Endothelial cell of umbilical vein (primary cell): ENCODE measurements at regions of chr15 and their contacts with region 1.

Region 1: DNA sequence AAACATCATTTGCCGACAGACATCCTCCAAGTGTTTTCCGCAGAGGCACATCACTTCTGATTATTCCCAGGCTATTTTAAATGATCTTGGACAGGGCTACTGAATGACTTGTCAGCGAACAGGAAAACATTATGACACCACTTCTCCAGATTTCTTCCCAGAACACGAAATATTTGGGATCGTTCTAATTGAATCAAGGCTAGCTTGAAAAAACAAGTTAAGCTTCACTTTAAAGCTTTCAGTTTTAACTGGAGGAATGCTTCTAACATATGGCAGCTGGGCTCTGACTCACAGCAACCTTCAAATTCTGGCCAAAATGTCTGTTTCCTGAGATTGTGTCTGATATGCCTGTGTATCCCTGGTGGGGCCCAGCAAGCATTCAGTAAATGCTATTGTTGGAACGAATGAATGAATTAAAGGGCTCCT is 127.0 kb upstream of the ICE2 start:
- DNase-seq: peak; percentile 99
- H3K4me3 ChIP-seq: peak overlapping the region in 2 of 3 experiments; percentile 60 to 77
- H3K27ac ChIP-seq: peak overlapping the region; percentile 97
- H3K4me1 ChIP-seq: peaks cover 27% of the 10 kb centered on the region
- H3K27me3 ChIP-seq: no peaks in the 10 kb centered on the region
- CTCF ChIP-seq: no peak
- POLR2A ChIP-seq: peak; percentile 29

Region 2: DNA sequence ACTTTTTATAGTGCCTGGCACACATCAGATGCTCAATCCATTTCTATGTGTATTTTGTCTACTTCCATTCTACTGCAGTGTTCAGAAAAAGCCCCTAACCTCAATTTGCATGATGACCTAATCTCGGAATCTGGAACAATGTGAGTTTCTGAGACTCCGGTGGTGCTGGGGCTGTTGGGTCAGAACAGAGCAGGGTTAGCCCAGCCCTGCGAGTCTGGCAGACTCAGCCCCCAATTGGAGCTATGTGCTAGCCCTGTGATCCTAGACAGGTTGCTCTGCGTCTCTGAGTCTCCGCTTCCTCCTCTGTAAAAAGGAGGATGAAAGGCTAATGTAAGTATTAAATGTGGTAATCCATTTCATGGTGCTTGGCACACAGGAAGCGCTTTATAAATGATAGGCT is 32.0 kb before region 1 on chr15:
- CTCF ChIA-PET with region 1: no interaction called
- POLR2A ChIA-PET with region 1: no interaction called
- dilution Hi-C with region 1: no loop called
- intact Hi-C with region 1: no loop called
- DNase-seq: no peak
- H3K4me3 ChIP-seq: no peak overlapping the region
- H3K27ac ChIP-seq: no peak overlapping the region
- H3K4me1 ChIP-seq: no peaks in the 10 kb centered on the region
- H3K27me3 ChIP-seq: no peaks in the 10 kb centered on the region
- CTCF ChIP-seq: no peak
- POLR2A ChIP-seq: no peak

Region 3: DNA sequence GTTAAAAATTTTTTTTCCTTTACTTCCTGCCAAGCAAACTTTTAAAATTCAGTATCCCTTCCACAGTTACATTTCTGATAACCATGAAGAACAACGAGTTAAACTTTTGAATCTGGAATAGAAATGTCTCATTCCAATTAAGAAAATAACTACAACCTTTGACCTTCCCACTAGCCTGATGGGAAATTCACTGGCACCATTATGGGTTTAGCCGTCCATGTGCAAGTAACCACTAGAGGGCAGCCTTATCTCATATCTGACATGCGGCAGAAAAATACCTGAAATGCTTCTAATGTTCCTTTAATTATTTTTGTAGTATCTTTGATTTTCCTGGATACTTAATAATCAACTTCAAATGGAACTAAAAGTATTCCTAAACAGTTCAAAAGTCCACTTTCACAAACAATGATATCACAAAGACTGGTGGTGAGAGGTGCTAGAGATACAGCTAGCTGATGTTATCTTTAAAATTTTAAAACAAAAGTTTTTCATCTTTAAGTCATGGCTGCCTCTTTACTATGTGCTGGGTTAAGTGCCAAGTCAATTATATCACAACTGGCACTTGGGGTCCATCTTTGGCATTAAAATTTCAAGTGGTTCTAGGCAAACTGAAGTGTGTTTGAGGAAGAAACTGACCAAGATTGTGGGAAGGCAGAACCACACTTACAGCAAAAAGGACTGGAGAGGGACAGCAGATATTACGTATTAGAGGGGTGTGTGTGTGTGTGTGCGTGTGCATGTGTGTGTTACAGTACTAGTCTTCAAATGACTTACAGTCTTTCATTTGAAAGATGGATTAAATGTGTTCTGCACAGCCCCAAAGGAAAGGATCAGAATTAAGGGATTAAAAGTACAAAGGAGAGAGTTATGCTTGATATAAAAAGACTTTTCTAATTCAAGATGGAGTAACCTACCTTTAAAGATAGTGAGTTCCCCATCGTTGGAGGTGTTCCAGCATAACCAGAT is 19.9 kb before region 1 on chr15:
- CTCF ChIA-PET with region 1: interaction called, 13 read pairs
- POLR2A ChIA-PET with region 1: interaction called, 7 read pairs
- dilution Hi-C with region 1: no loop called
- intact Hi-C with region 1: no loop called
- DNase-seq: peak; percentile 80
- H3K4me3 ChIP-seq: no peak overlapping the region
- H3K27ac ChIP-seq: no peak overlapping the region
- H3K4me1 ChIP-seq: peaks cover 25% of the 10 kb centered on the region
- H3K27me3 ChIP-seq: no peaks in the 10 kb centered on the region
- CTCF ChIP-seq: peak; percentile 68 to 75
- POLR2A ChIP-seq: no peak

Region 4: GRCh38 chr15:60620708-60621107 is 14.8 kb after region 1 on chr15:
- CTCF ChIA-PET with region 1: interaction called, 12 read pairs
- POLR2A ChIA-PET with region 1: no interaction called
- dilution Hi-C with region 1: no loop called
- intact Hi-C with region 1: no loop called
- DNase-seq: no peak
- H3K4me3 ChIP-seq: no peak overlapping the region
- H3K27ac ChIP-seq: no peak overlapping the region
- H3K4me1 ChIP-seq: no peaks in the 10 kb centered on the region
- H3K27me3 ChIP-seq: no peaks in the 10 kb centered on the region
- CTCF ChIP-seq: no peak
- POLR2A ChIP-seq: no peak

Region 5: DNA sequence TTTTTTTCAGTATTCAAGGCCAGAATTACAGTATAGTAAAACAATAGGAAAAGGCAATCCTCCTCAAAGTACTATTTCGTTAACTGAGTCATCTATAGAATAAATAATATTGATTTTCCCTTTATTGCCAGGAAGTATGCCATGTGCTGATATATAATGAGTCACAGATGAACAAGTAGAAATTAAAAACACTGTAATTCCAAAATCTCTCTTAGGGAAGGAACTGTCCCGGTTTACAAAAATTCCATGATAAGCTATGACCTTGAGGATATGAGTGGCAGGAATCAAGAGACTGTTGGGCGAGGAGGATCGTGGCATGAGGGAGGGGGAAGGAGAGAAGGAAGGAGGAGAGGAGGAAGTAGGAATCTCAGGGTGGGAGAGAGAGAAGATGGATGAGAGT is 39.0 kb after region 1 on chr15:
- CTCF ChIA-PET with region 1: interaction called, 5 read pairs
- POLR2A ChIA-PET with region 1: no interaction called
- dilution Hi-C with region 1: no loop called
- intact Hi-C with region 1: loop called (anchors 1 kb)
- DNase-seq: peak; percentile 87
- H3K4me3 ChIP-seq: no peak overlapping the region
- H3K27ac ChIP-seq: peak overlapping the region; percentile 46
- H3K4me1 ChIP-seq: peaks cover 23% of the 10 kb centered on the region
- H3K27me3 ChIP-seq: no peaks in the 10 kb centered on the region
- CTCF ChIP-seq: no peak
- POLR2A ChIP-seq: no peak

Region 6: DNA sequence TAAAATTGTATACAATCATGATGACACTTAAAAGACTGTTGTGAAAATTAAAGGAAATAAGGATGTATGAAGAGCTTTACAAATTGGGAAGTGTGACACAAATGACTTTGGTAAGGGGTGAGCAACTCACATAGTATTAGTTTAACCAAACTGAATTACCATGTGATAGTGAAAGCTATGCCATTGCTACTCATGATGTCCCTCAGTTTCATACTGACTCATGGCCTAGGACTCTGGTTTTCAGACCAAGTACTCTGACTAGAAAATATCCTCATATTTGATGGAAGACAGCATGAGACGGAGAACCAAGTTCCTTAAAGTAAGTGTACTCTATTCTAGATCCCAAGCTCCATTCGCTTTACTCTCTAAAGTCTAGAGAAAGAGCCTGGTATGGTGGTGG is 76.2 kb after region 1 on chr15:
- CTCF ChIA-PET with region 1: no interaction called
- POLR2A ChIA-PET with region 1: no interaction called
- dilution Hi-C with region 1: no loop called
- intact Hi-C with region 1: no loop called
- DNase-seq: no peak
- H3K4me3 ChIP-seq: no peak overlapping the region
- H3K27ac ChIP-seq: no peak overlapping the region
- H3K4me1 ChIP-seq: no peaks in the 10 kb centered on the region
- H3K27me3 ChIP-seq: no peaks in the 10 kb centered on the region
- CTCF ChIP-seq: no peak
- POLR2A ChIP-seq: no peak

Region 7: DNA sequence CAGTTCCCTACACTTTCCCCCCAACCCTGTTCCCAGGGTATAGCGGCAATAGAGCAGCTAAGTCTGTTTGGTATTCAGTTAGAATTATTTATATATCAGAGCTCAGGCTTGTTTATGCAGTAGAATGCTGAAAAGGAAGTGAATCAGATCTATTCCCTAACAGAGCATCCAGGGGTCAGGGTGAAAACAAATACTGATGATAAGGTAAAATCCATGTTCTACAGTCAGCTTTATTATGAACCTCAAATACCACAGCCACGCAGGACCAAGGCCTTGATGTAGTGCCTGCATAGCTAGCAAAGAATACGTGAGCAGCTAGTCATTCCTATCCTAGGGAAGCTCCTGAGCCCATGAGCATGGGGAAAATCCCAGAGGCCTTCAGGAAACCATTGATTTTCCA is 102.8 kb after region 1 on chr15:
- CTCF ChIA-PET with region 1: interaction called, 5 read pairs
- POLR2A ChIA-PET with region 1: no interaction called
- dilution Hi-C with region 1: no loop called
- intact Hi-C with region 1: loop called (anchors 1 kb)
- DNase-seq: peak; percentile 89
- H3K4me3 ChIP-seq: no peak overlapping the region
- H3K27ac ChIP-seq: peak overlapping the region; percentile 46
- H3K4me1 ChIP-seq: peaks cover 24% of the 10 kb centered on the region
- H3K27me3 ChIP-seq: no peaks in the 10 kb centered on the region
- CTCF ChIP-seq: no peak
- POLR2A ChIP-seq: no peak

Region 8: GRCh38 chr15:60787837-60788691 is 182.2 kb after region 1 on chr15:
- CTCF ChIA-PET with region 1: interaction called, 11 read pairs
- POLR2A ChIA-PET with region 1: no interaction called
- dilution Hi-C with region 1: no loop called
- intact Hi-C with region 1: no loop called
- DNase-seq: peak; percentile 31
- H3K4me3 ChIP-seq: no peak overlapping the region
- H3K27ac ChIP-seq: no peak overlapping the region
- H3K4me1 ChIP-seq: no peaks in the 10 kb centered on the region
- H3K27me3 ChIP-seq: no peaks in the 10 kb centered on the region
- CTCF ChIP-seq: peak; percentile 38 to 39
- POLR2A ChIP-seq: no peak

Region 9: DNA sequence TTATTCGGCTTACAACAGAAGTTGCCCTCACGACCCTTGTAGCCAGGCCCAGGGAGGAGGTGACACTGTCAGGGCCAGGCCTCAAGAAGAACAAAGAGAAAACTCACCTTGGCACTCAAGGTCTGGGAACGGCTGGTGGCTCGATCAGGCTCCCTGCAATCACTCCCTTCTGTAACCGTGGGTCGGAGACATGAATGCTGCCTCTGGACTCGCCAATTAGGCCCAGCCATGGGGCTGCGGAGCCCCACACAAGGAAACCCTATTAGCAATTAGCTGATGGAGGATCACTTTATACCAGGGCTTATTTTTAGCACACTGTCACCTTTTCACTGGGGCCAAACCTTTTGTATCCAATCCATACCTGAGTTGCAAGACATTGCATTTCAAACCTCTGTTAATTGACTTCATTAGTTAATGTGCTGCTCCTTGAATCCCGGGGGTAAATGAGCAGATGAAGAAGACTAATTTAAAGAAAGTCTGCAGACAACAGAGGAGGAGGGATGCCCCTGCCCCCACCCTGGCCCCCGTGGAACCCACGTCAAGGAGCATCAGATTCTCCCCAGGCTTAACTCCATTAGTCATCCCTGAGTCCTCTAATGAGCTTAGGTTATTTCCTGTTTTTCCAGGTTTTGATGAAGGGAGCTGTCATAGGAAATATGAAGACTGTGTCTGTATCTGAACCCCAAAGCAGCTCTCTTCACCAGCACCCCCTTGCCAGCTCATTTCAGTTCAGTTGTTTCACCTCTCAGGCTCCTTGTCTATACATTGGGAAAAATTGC is 367.9 kb after region 1 on chr15:
- CTCF ChIA-PET with region 1: no interaction called
- POLR2A ChIA-PET with region 1: no interaction called
- dilution Hi-C with region 1: no loop called
- intact Hi-C with region 1: no loop called
- DNase-seq: peak; percentile 69
- H3K4me3 ChIP-seq: no peak overlapping the region
- H3K27ac ChIP-seq: peak overlapping the region; percentile 85
- H3K4me1 ChIP-seq: peaks cover 53% of the 10 kb centered on the region
- H3K27me3 ChIP-seq: no peaks in the 10 kb centered on the region
- CTCF ChIP-seq: no peak
- POLR2A ChIP-seq: no peak